ENCODE measurements at regions of chr19 and their contacts with region 1.

Region 1: DNA sequence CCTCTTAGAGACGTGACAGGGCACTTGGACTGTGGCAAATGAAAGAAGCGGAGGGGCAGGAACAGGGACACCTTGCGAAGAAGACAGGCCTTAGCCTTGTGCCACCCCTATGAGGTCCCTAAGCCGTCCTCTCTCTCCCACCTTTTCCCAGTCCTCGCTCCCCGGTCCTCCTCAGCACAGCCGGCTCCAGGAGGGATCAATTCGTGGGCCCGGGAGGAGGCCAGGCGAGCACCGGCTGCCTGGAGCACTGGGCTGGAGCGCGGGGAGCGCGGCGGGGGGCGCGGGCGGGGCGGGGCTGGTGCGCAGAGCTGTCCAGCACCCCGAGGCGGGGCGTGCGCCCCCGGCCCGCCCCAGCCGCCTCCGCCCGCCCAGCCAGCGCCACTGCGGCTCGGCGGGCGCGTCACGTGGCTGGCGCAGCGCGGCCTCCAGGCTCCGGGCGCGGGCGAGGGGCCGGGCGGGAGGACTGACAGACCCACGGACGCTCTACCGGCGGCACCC is at the start of gene LRP3:
- DNase-seq: no peak
- H3K4me3 ChIP-seq: peak within 1 kb of the TSS; percentile 62 to 63
- H3K27ac ChIP-seq: peak within 1 kb of the TSS; percentile 75
- H3K4me1 ChIP-seq: peaks cover 15% of the 10 kb centered on the region
- H3K27me3 ChIP-seq: no peaks in the 10 kb centered on the region
- CTCF ChIP-seq: no peak
- POLR2A ChIP-seq: no peak
- total RNA-seq, gene LRP3: 20.6 TPM

Region 2: DNA sequence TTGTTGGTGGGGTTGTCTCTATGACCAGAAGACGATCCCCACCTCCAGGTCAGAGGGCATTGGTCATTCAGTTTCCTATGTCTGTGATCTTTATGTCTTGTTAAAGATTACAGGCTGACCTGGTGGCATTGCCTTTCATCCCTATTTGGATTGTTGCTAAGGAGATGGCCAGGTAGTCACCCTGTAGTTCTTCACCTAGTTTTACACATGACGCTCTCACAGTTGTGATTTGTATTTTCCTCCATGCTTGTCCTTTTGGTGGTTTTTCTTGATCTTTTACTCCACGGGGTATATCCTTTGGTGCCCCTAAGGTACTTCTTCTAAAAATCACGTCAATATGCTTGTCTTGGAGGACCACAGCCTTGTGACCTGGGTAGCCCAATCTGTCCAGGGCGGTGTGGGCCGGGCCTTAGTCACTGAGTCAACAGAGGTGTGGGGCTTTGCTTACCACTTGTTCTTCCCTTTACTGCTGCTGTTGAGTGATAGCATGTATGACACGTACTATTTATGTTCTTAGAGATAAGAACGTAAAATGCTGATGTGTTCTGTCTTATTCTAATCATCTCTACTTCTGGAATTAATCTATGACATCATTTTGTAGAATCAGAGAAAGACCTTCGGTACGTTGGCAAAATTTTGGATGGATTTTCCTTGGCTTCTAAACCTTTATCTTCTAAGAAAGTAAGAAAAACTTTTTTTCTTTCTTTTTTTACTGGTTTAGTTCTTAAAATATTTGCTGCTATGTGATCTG is 92.8 kb before region 1 on chr19:
- intact Hi-C with region 1: no loop called
- DNase-seq: no peak
- H3K4me3 ChIP-seq: no peak overlapping the region
- H3K27ac ChIP-seq: no peak overlapping the region
- H3K4me1 ChIP-seq: no peaks in the 10 kb centered on the region
- H3K27me3 ChIP-seq: no peaks in the 10 kb centered on the region
- CTCF ChIP-seq: no peak
- POLR2A ChIP-seq: no peak

Region 3: GRCh38 chr19:33132425-33132824 is 61.5 kb before region 1 on chr19:
- intact Hi-C with region 1: loop called (anchors 10 kb)
- DNase-seq: no peak
- H3K4me3 ChIP-seq: no peak overlapping the region
- H3K27ac ChIP-seq: no peak overlapping the region
- H3K4me1 ChIP-seq: no peaks in the 10 kb centered on the region
- H3K27me3 ChIP-seq: no peaks in the 10 kb centered on the region
- CTCF ChIP-seq: no peak
- POLR2A ChIP-seq: no peak

Region 4: GRCh38 chr19:33152178-33152577 is 41.7 kb before region 1 on chr19:
- intact Hi-C with region 1: no loop called
- DNase-seq: no peak
- H3K4me3 ChIP-seq: no peak overlapping the region
- H3K27ac ChIP-seq: no peak overlapping the region
- H3K4me1 ChIP-seq: no peaks in the 10 kb centered on the region
- H3K27me3 ChIP-seq: no peaks in the 10 kb centered on the region
- CTCF ChIP-seq: no peak
- POLR2A ChIP-seq: no peak